Cardiac septum (tissue), 1 donor: ENCODE measurements at regions of chr14 and their contacts with region 1.

Region 1: DNA sequence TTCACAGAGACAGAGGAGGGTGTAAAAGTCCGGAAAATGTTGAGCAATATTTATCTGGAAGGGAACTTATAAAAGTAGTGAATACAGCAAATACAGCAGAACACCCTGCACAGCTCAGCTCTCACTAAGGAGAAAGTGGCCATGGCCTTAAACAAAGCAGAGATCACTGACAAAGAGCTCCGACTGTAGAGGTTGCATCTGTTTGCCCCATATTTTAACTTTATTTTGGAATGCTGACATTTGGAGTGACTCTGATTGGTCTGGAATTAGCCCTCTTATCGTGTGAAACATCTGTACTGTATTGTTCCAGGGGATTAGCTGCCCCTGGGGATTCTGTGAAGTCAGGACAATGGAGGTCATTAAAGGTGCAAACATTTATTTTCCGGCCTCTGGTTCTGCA is 1275.7 kb upstream of the FLRT2 start:
- DNase-seq: no peak

Region 2: DNA sequence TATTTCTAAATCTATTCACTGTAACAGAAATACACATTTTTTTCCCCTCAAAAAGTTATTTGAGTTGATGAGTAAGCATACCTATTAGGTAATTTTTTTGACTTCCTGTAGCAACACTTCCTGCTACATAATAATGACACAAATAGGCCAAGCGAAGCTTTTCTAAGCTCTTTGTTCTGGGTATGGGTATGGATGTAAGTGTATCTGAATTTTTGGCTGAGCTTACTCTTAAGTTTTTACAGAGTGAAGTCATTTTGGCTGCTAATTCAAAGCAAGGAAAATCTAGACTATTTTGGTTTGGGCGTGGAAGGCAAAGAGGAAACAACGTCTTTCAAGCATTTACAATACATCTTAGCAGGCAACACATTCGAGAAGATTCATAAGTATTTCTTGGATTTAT is 69.7 kb after region 1 on chr14:
- intact Hi-C with region 1: loop called (anchors 5 kb)
- DNase-seq: no peak